ENCODE measurements at regions of chr11 and their contacts with region 1.

Region 1: GRCh38 chr11:6531267-6531752 is 34.2 kb downstream of the DNHD1 start:
- DNase-seq: no peak
- ATAC-seq: peak; percentile 67 to 71

Region 2: DNA sequence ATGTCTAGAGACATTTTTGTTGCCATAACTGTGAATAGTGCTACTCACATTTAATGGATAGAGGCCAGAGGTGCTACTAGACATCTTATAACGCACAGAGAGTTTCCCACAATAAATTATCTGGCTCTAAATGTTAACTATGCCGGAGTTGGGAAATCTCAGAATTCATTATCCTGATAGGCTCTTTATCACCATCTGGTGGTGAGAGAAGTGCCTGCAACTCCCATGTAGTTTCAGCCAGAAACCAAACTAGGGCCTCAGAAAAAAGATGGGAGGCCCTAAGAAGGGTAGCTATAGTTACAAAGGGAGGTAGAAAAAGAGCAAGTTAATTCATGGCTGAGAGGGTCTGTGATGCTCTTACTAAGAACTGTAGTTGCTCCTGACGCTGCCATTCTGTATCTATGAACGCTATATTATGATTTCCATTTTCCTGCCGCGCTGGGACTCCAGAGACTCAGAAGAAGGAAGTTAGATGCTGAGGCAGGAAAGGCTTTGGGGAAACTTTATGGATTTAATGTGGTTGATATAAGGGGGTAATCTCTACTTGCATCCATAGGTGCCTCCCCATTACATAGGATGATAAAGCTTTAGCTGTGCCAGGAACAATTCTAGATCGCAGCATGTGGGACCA is 174.7 kb after region 1 on chr11:
- intact Hi-C with region 1: loop called in 1 of 2 experiments (anchors 2 kb)
- DNase-seq: peak; percentile 45
- ATAC-seq: peak; percentile 29 to 58